ENCODE measurements at regions of chr16 and their contacts with region 1.

Region 1: GRCh38 chr16:56700195-56700594 is 17.9 kb downstream of the MT1X start:
- DNase-seq: no peak
- H3K4me3 ChIP-seq: no peak overlapping the region
- H3K27ac ChIP-seq: no peak overlapping the region
- H3K27me3 ChIP-seq: no peaks in the 10 kb centered on the region
- CTCF ChIP-seq: no peak

Region 2: GRCh38 chr16:56317998-56318826 is 382.0 kb before region 1 on chr16:
- CTCF ChIA-PET with region 1: interaction called, 11 read pairs
- POLR2A ChIA-PET with region 1: no interaction called
- DNase-seq: peak; percentile 45
- H3K4me3 ChIP-seq: peak overlapping the region; percentile 47
- H3K27ac ChIP-seq: no peak overlapping the region
- H3K27me3 ChIP-seq: peaks cover 18% of the 10 kb centered on the region
- CTCF ChIP-seq: peak; percentile 95

Region 3: GRCh38 chr16:56506941-56507340 is 193.3 kb before region 1 on chr16:
- CTCF ChIA-PET with region 1: interaction called, 17 read pairs
- POLR2A ChIA-PET with region 1: no interaction called
- DNase-seq: peak; percentile 36
- H3K4me3 ChIP-seq: no peak overlapping the region
- H3K27ac ChIP-seq: no peak overlapping the region
- H3K27me3 ChIP-seq: no peaks in the 10 kb centered on the region
- CTCF ChIP-seq: no peak

Region 4: DNA sequence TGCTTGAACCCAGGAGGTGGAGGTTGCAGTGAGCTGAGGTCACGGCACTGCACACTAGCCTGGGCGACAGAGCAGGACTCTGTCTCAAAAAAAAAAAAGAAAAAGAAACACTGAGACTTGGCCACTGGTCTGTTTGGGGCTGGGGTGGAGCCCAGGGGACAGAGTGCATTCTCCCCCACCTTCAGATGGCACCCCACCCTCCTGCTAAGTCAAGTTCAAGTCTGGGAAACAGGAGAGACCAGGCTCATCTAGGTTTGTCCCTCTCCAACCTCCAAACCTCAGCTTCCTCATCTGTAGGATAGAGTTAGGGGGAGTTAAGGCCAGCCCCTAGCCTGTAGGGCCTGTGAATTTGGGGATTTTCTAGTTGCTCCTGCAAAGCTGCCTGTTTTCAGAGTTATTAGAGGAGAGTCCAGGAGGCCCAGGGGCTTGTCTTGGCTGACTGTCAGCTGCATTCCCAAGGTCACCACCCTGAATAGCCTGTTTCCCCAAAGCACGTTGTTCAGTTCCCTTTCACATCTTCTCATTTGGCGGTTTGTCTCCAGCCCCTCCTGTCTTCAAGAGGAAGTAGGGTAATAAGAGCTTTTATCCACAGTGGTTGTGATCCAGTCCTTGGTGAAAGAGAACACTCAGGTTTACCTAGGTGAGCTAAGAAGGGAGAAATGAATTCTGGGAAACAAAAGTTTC is 108.7 kb before region 1 on chr16:
- CTCF ChIA-PET with region 1: interaction called, 15 read pairs
- POLR2A ChIA-PET with region 1: no interaction called
- DNase-seq: no peak
- H3K4me3 ChIP-seq: no peak overlapping the region
- H3K27ac ChIP-seq: no peak overlapping the region
- H3K27me3 ChIP-seq: peaks cover 43% of the 10 kb centered on the region
- CTCF ChIP-seq: no peak

Region 5: GRCh38 chr16:56681939-56682702 is 18.1 kb before region 1 on chr16 and contains the start of gene MT1X:
- CTCF ChIA-PET with region 1: interaction called, 11 read pairs
- POLR2A ChIA-PET with region 1: interaction called, 7 read pairs
- DNase-seq: peak; percentile 59
- H3K4me3 ChIP-seq: peak within 1 kb of the TSS; percentile 77
- H3K27ac ChIP-seq: no peak within 1 kb of the TSS
- H3K27me3 ChIP-seq: peaks cover 2% of the 10 kb centered on the region
- CTCF ChIP-seq: no peak
- polyA plus RNA-seq, gene MT1X: 19.5 and 30.1 TPM in 2 replicates

Region 6: GRCh38 chr16:56789360-56789759 is 89.2 kb after region 1 on chr16:
- CTCF ChIA-PET with region 1: interaction called, 14 read pairs
- POLR2A ChIA-PET with region 1: no interaction called
- DNase-seq: no peak
- H3K4me3 ChIP-seq: no peak overlapping the region
- H3K27ac ChIP-seq: no peak overlapping the region
- H3K27me3 ChIP-seq: no peaks in the 10 kb centered on the region
- CTCF ChIP-seq: peak; percentile 56

Region 7: GRCh38 chr16:56869513-56870275 is 169.5 kb after region 1 on chr16:
- CTCF ChIA-PET with region 1: no interaction called
- POLR2A ChIA-PET with region 1: no interaction called
- DNase-seq: no peak
- H3K4me3 ChIP-seq: no peak overlapping the region
- H3K27ac ChIP-seq: no peak overlapping the region
- H3K27me3 ChIP-seq: no peaks in the 10 kb centered on the region
- CTCF ChIP-seq: peak; percentile 8; the same call in 1 of the 2 replicates

Region 8: GRCh38 chr16:56970934-56971767 is 271.0 kb after region 1 on chr16:
- CTCF ChIA-PET with region 1: no interaction called
- POLR2A ChIA-PET with region 1: no interaction called
- DNase-seq: no peak
- H3K4me3 ChIP-seq: no peak overlapping the region
- H3K27ac ChIP-seq: no peak overlapping the region
- H3K27me3 ChIP-seq: peaks cover 2% of the 10 kb centered on the region
- CTCF ChIP-seq: no peak

Measured in AG04450 (cell line).